Vagina (tissue), 2 donors: ENCODE measurements at regions of chr16 and their contacts with region 1.

Region 1: DNA sequence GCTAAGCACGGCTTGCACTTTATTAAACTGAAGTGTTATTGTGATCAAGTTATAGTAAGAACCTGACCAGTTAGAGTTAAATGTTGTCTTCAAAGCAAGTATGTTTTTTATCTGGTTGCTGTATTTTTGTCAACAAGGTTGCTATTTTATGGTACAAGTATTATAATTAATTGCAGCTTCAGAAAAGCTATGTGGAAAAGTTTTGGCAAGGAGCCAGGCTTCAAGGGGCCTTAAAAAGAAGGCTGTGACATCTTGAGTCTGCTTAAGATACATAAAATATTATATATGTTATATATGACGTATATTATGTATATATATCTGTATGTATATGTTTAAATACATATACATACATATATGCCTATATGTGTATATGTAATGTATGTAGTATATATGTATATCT is 1461.2 kb upstream of the CDH8 start:
- DNase-seq: no peak
- H3K4me3 ChIP-seq: no peak overlapping the region
- H3K27ac ChIP-seq: no peak overlapping the region
- H3K4me1 ChIP-seq: no peaks in the 10 kb centered on the region
- H3K27me3 ChIP-seq: no peaks in the 10 kb centered on the region
- CTCF ChIP-seq: no peak
- POLR2A ChIP-seq: no peak

Region 2: DNA sequence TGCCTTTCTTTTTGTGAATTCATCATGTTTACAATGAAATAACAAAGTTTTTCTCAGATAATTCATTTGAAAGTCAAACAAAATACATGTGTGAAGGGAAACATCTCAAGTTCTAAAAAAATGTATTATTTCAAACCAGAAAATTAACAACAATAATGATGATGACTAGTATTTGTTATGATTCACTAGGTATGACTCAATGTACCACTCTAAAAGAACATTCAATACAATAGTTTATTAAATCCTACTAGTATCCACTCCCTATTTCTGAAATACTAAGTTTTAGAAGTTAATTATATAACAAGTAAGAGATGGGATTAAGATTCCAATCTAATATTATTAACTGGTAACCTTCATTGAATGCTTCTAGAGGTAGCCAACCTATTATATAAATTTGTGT is 16.3 kb before region 1 on chr16:
- intact Hi-C with region 1: loop called (anchors 1 kb)
- DNase-seq: no peak
- H3K4me3 ChIP-seq: no peak overlapping the region
- H3K27ac ChIP-seq: no peak overlapping the region
- H3K4me1 ChIP-seq: no peaks in the 10 kb centered on the region
- H3K27me3 ChIP-seq: no peaks in the 10 kb centered on the region
- CTCF ChIP-seq: no peak
- POLR2A ChIP-seq: no peak